HCT116 (cell line): ENCODE measurements at regions of chr13 and their contacts with region 1.

Region 1: GRCh38 chr13:51858433-51859247 is 3.1 kb upstream of the CCDC70 start:
- DNase-seq: no peak
- ATAC-seq: no peak
- H3K4me3 ChIP-seq: no peak overlapping the region
- H3K27ac ChIP-seq: no peak overlapping the region
- H3K4me1 ChIP-seq: peaks cover 0 to 12% of the 10 kb centered on the region in 2 experiments; a peak in 2 of 4 replicates
- H3K27me3 ChIP-seq: no peaks in the 10 kb centered on the region
- CTCF ChIP-seq: no peak
- POLR2A ChIP-seq: no peak
- RAD21 ChIP-seq: no peak

Region 2: DNA sequence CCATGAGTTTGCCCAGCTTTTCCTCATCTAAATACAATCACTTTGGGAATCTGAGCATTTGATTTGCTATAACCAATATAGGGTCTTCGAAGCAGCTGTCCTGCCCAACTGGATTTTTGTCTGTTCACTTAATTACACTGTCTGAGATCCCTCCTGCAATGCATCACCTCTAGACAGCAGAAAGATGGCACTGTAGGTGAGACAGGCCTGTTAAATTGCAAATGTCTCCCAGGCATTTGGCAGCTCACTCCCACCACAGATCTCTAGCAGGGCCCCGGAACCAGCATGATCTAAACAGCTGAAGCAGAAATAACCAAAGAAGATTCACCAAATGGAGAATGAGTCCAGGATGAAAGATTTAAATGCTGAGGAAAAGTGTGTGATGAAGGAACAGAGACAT is 561.1 kb before region 1 on chr13:
- CTCF ChIA-PET with region 1: no interaction called
- POLR2A ChIA-PET with region 1: no interaction called
- RAD21 ChIA-PET with region 1: no interaction called
- intact Hi-C with region 1: no loop called
- DNase-seq: no peak
- ATAC-seq: peak; percentile 63
- H3K4me3 ChIP-seq: no peak overlapping the region
- H3K27ac ChIP-seq: no peak overlapping the region
- H3K4me1 ChIP-seq: no peaks in the 10 kb centered on the region
- H3K27me3 ChIP-seq: no peaks in the 10 kb centered on the region
- CTCF ChIP-seq: peak in 2 of 3 experiments; percentile 7 to 25; a peak in 1 of 6 replicates
- POLR2A ChIP-seq: no peak
- RAD21 ChIP-seq: peak; percentile 26; the same call in 1 of the 2 replicates

Region 3: DNA sequence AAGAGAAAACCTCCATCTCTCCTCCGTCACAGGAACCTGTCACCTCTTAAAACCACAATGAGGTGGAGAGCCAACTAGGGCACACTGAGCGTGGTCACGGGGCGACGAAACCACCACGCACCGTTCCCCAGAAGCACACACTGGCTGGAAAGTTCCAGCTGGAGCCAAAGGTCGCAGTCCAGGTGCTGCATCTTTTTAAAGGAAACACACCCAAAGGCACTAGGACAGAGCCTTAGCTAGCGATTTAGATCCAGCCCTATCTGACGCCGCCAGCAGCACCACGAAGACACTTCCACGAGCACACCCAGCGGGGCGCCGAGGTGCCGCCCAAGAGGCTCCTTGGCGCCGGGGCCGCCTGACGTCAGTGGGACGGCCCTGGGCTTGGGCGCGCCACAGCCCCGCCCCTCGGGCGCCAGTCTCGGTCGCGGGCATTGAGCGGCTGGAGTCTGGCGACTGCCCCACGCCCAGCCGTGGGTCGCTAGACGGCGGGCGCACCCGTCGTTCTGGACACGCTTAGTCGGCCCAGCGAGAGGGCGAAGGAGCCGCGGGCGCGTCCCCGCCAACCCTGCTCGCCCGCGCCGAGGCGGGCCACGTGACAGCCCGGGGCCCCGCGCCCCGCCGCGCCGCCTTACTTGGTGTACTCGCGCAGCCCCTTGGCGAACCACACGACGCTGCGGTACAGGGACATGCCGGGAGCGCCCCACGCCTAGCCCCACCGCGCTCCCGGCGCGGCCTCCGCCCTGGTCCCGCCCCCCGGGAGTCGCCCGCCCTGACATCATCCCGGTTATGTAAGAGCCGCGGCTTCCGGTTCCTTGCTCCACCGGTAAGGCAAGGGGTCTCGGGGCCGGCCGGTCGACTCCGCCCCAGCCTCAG is 55.0 kb before region 1 on chr13 and contains the start of gene DHRS12:
- CTCF ChIA-PET with region 1: no interaction called
- POLR2A ChIA-PET with region 1: no interaction called
- RAD21 ChIA-PET with region 1: no interaction called
- intact Hi-C with region 1: no loop called
- DNase-seq: peak; percentile 43
- ATAC-seq: peak; percentile 87
- H3K4me3 ChIP-seq: peak within 1 kb of the TSS; percentile 74 to 78
- H3K27ac ChIP-seq: peak within 1 kb of the TSS; percentile 98
- H3K4me1 ChIP-seq: peaks cover 22 to 34% of the 10 kb centered on the region in 2 experiments
- H3K27me3 ChIP-seq: no peaks in the 10 kb centered on the region
- CTCF ChIP-seq: no peak
- POLR2A ChIP-seq: peak; percentile 59
- RAD21 ChIP-seq: no peak
- total RNA-seq, gene DHRS12: 3.9 TPM

Region 4: DNA sequence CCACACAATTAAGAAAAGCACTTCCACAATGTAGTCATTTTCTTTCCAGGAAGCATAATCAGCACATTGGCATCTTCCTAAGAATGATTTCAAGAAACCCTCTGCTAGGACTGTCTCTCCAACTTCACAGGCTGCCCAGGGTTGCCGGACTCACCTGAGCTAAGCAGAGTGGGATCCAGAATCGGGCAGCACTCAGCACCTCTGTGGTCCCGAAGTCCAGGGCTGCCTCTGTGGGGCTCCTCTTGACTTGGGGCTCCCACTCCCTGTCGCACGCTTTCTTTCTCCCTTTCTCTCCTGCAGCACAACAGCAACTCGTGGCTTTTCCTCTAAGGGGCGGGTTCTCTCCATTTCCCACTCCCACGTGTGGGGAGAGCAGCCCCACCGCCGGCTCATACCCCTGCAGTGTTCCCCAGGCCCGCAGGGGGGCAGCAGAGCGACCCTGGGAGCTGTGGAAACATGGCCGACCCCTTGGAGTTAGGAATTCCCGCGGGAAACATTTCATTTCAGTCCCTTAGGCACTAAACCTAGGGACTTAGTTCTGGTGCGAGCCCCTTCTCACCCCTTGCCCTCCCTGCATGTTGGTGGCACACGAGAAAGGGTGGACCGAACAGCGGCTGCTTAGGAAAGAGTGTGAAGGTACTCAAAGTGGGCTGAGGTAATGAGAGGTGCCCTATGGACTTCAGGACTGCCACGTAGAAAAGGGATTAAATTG is 13.6 kb before region 1 on chr13 and contains the start of gene TMEM272:
- CTCF ChIA-PET with region 1: interaction called, 10 read pairs
- POLR2A ChIA-PET with region 1: no interaction called
- RAD21 ChIA-PET with region 1: no interaction called
- intact Hi-C with region 1: no loop called
- DNase-seq: peak; percentile 23
- ATAC-seq: peak; percentile 85
- H3K4me3 ChIP-seq: peak within 1 kb of the TSS in 1 of 2 experiments; percentile 34; a peak in 2 of 4 replicates
- H3K27ac ChIP-seq: no peak within 1 kb of the TSS
- H3K4me1 ChIP-seq: peaks cover 3 to 14% of the 10 kb centered on the region in 2 experiments; a peak in 3 of 4 replicates
- H3K27me3 ChIP-seq: no peaks in the 10 kb centered on the region
- CTCF ChIP-seq: peak; percentile 54 to 98 (median 92); a peak in 5 of 6 replicates
- POLR2A ChIP-seq: no peak
- RAD21 ChIP-seq: peak; percentile 44; the same call in 1 of the 2 replicates
- total RNA-seq, gene TMEM272: 0.17 TPM

Region 5: GRCh38 chr13:51978796-51979556 is 120.3 kb after region 1 on chr13:
- CTCF ChIA-PET with region 1: no interaction called
- POLR2A ChIA-PET with region 1: no interaction called
- RAD21 ChIA-PET with region 1: no interaction called
- intact Hi-C with region 1: no loop called
- DNase-seq: no peak
- ATAC-seq: peak; percentile 25; the same call in 1 of the 2 replicates
- H3K4me3 ChIP-seq: no peak overlapping the region
- H3K27ac ChIP-seq: no peak overlapping the region
- H3K4me1 ChIP-seq: no peaks in the 10 kb centered on the region
- H3K27me3 ChIP-seq: no peaks in the 10 kb centered on the region
- CTCF ChIP-seq: no peak
- POLR2A ChIP-seq: no peak
- RAD21 ChIP-seq: no peak